Pancreas (tissue), 10 donors: ENCODE measurements at regions of chr1 and their contacts with region 1.

Region 1: DNA sequence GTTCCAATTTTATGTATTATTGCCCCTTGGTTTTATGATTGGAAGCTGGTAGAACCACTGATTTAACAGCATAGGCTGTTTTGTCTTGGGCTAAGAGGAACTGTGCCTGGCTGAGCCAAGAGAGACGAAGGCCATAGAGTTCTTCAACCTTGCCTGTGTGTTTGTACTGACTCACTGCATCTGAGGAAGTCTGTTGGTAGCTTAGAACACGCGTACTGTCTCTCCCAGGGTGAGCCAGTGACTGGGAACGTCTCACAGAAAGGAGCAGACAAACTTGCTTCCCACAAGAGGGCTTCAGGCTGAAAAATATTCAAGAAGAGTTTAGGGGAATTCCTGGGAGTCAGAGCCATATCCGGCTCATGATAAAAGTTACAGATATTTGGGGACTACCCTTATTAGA is 14.9 kb downstream of the TMEM51 start:
- DNase-seq: peak in 1 of 6 donors; percentile 54
- ATAC-seq: peak; percentile 54 to 78 (median 70)
- H3K4me3 ChIP-seq: no peak overlapping the region
- H3K27ac ChIP-seq: peak overlapping the region; percentile 0 to 73 (median 44)
- H3K4me1 ChIP-seq: peaks cover 45 to 76% (median 53%) of the 10 kb centered on the region in 3 donors
- H3K27me3 ChIP-seq: no peaks in the 10 kb centered on the region
- CTCF ChIP-seq: no peak

Region 2: DNA sequence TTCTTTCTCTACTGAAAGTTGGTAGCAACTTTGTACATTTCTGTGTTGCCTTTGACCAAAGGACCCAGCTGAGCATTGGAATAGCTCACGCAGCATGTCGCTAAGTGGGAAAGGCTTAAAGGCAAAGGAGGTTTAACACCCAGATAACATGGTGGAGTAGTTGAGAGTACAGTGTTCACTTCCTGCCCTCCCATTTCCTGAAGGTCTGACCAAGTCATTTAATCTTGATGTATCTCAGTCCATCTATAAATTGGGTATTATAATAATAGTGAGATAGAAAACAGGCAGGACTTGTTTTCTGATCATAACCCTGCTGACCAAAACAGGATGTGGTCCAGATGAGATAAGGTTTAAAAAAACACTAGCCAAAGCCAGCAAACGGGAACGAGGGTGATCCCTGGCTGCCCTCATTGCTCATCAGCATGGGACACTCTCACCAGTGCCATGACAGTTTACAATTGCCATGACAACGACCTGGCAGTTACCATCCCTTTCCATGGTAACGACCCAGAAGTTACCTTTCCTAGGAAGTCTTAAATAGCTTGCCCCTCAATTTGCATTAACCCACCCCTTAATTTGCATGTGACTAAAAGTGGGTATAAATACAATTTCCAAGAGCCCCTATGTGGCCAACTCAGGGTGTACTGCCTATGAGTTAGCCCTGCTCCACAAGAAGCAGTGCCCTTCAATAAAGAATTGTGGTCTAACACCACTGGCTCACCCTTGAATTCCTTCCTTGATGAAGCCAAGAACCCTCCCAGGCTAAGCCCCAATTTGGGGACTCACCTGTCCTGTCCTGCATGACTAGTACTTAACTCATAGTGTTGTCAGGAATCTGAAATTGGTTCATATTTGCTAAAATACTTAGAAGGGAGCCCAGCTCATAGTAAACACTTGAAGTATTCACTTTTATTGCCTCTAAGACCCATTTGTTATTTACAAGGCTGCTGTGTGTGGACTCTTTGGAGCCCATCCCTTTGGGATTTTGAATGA is 50.1 kb after region 1 on chr1:
- intact Hi-C with region 1: loop called in 1 of 3 experiments (anchors 10 kb)
- DNase-seq: peak in 1 of 6 donors; percentile 31
- ATAC-seq: peak; percentile 29 to 62 (median 38)
- H3K4me3 ChIP-seq: no peak overlapping the region
- H3K27ac ChIP-seq: peak overlapping the region in 1 of 4 donors; percentile 8
- H3K4me1 ChIP-seq: peaks cover 0 to 16% (median 9%) of the 10 kb centered on the region in 3 donors
- H3K27me3 ChIP-seq: no peaks in the 10 kb centered on the region
- CTCF ChIP-seq: no peak